Natural killer cell (primary cell): ENCODE measurements at regions of chr6 and their contacts with region 1.

Region 1: DNA sequence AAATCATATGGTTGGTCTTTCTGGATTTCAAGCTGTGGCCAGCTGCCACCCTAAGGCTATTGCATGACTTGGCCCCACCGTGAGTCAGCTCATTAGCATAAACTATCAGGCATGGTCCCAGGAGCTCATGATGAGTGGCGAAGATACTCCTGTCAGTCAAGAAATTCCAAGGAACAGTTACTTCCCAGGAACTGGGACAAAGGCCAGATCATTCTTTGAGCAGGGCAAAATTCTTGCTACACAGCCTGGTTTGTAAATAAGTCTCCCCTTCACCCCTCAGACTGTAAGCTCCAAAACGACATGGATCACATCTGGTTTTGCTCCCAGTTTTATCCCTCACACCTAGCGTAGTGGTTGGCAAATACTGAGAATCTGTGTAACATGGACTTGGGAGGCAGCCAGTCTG is 33.0 kb upstream of the KIAA1586 start:
- DNase-seq: no peak
- ATAC-seq: no peak
- H3K4me3 ChIP-seq: no peak overlapping the region
- H3K4me3 Mint-ChIP-seq: no peak overlapping the region
- H3K27ac ChIP-seq: no peak overlapping the region
- H3K27ac Mint-ChIP-seq: no peak overlapping the region
- H3K4me1 ChIP-seq: no peaks in the 10 kb centered on the region
- H3K4me1 Mint-ChIP-seq: no peaks in the 10 kb centered on the region
- H3K27me3 ChIP-seq: no peaks in the 10 kb centered on the region
- H3K27me3 Mint-ChIP-seq: peaks cover 5 to 12% of the 10 kb centered on the region in 2 donors
- CTCF ChIP-seq: no peak

Region 2: DNA sequence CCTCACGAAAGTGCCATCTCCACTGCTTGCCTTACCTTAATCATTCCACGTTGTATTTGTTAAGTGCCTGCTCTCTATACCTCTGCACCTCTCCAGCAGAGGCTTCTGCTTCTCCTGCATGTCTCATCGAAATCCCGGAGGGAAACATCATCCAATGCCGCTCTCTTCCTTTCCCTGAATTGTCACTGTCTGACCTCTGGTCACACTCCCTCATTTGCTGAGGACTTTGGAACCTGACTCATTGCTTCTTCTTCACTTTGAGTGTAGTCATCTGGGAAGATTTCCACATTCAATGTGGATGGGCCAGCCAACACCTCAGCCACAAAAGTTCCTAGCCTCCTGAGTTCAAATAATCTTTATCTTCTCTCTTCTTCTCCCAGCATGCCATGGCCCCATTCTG is 137.6 kb before region 1 on chr6:
- intact Hi-C with region 1: no loop called
- DNase-seq: no peak
- ATAC-seq: no peak
- H3K4me3 ChIP-seq: no peak overlapping the region
- H3K4me3 Mint-ChIP-seq: no peak overlapping the region
- H3K27ac ChIP-seq: no peak overlapping the region
- H3K27ac Mint-ChIP-seq: no peak overlapping the region
- H3K4me1 ChIP-seq: no peaks in the 10 kb centered on the region
- H3K4me1 Mint-ChIP-seq: no peaks in the 10 kb centered on the region
- H3K27me3 ChIP-seq: no peaks in the 10 kb centered on the region
- H3K27me3 Mint-ChIP-seq: peaks cover 15 to 18% of the 10 kb centered on the region in 2 donors
- CTCF ChIP-seq: no peak

Region 3: DNA sequence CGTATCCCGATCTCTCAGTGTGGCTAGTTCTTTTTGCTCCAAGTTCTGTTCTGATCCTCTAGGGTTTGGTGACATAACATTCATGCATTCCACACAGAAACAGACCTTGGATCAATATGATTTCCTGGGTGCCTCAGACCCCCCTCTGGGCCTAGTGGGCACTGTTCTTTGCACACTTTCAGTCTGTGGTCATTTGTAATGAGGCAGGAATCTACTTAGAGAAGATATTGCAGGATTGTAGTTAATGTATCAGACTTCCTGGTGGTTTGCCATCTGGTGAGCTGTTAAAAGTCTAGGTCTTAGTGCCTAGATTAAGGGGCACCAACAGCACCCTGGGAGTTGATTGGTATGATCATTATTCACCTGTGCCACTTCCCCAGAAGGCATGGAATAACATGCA is 51.1 kb before region 1 on chr6:
- intact Hi-C with region 1: loop called (anchors 2 kb)
- DNase-seq: no peak
- ATAC-seq: no peak
- H3K4me3 ChIP-seq: no peak overlapping the region
- H3K4me3 Mint-ChIP-seq: no peak overlapping the region
- H3K27ac ChIP-seq: no peak overlapping the region
- H3K27ac Mint-ChIP-seq: no peak overlapping the region
- H3K4me1 ChIP-seq: no peaks in the 10 kb centered on the region
- H3K4me1 Mint-ChIP-seq: no peaks in the 10 kb centered on the region
- H3K27me3 ChIP-seq: no peaks in the 10 kb centered on the region
- H3K27me3 Mint-ChIP-seq: peaks cover 17 to 20% of the 10 kb centered on the region in 2 donors
- CTCF ChIP-seq: no peak

Region 4: DNA sequence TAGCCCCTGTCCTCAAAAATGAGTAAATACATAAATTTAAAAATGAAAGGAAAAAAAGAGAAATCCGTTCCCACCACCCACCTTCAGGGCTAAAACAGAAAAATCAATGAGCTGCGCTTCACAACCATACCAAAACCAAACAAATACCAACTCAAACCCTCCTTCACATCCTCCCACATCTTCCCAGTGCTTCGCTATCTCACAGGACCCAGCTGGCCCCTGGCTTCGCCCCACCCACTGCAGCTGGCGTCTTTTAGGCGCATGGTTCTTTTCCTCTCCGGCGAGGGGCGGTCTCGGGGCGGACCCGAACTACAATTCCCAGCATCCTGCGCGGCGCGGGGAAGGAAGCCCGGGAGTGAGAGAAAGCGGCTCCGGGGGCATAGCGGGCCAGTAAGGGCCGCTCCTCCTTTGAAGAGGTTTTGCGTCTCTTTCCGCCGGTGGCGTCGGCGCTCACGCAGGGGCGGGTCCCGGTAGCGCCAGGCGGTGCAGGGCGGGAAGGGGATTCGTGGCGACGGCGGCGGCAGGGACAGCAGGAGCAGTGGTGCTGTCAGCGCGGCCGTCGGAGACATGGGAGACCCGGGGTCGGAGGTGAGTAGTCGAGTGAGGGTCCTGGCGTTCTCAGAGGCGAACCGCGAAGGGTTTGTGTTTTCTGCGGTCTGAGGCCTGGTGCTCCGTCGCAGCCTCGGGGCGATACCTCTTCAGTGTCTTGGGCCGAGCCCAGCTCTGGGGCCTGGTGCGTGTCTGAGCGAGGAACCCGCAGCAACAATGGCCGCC is 76.3 kb after region 1 on chr6 and contains the start of gene ZNF451:
- intact Hi-C with region 1: no loop called
- DNase-seq: peak; percentile 93 to 96
- ATAC-seq: peak; percentile 91 to 97 (median 93)
- H3K4me3 ChIP-seq: peak within 1 kb of the TSS; percentile 71
- H3K4me3 Mint-ChIP-seq: peak within 1 kb of the TSS; percentile 94
- H3K27ac ChIP-seq: peak within 1 kb of the TSS; percentile 78
- H3K27ac Mint-ChIP-seq: peak within 1 kb of the TSS; percentile 87 to 93
- H3K4me1 ChIP-seq: peaks cover 6% of the 10 kb centered on the region
- H3K4me1 Mint-ChIP-seq: peaks cover 31 to 35% of the 10 kb centered on the region in 2 donors
- H3K27me3 ChIP-seq: no peaks in the 10 kb centered on the region
- H3K27me3 Mint-ChIP-seq: no peaks in the 10 kb centered on the region
- CTCF ChIP-seq: no peak
- total RNA-seq, gene ZNF451: 121 to 131 (median 122) TPM

Region 5: DNA sequence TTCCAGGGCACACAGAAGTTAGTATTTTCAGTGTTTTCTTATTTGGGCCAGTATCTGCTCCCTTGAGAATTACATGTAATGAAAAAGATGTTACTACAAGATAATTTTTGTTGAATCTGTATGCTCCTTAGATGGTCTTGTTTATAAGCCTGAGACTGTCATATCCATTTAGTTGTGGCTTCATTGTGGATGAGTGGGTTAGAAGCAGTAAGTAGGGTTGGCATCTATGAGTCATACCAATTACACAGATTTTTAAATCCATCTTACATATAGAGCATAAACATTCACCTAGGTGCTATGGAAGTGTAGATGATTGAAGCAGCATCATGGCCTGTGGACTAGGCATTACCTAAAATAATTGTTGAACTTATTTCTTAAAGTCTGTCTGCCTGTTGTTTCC is 145.1 kb after region 1 on chr6:
- intact Hi-C with region 1: no loop called
- DNase-seq: no peak
- ATAC-seq: no peak
- H3K4me3 ChIP-seq: no peak overlapping the region
- H3K4me3 Mint-ChIP-seq: no peak overlapping the region
- H3K27ac ChIP-seq: no peak overlapping the region
- H3K27ac Mint-ChIP-seq: no peak overlapping the region
- H3K4me1 ChIP-seq: no peaks in the 10 kb centered on the region
- H3K4me1 Mint-ChIP-seq: no peaks in the 10 kb centered on the region
- H3K27me3 ChIP-seq: no peaks in the 10 kb centered on the region
- H3K27me3 Mint-ChIP-seq: no peaks in the 10 kb centered on the region
- CTCF ChIP-seq: no peak